ENCODE measurements at regions of chr22 and their contacts with region 1.

Region 1: GRCh38 chr22:36065775-36066559 is 37.3 kb upstream of the RBFOX2 start:
- DNase-seq: peak; percentile 94
- ATAC-seq: peak; percentile 92
- H3K4me3 Mint-ChIP-seq: peak overlapping the region; percentile 84
- H3K27ac Mint-ChIP-seq: peak overlapping the region; percentile 87
- H3K4me1 Mint-ChIP-seq: peaks cover 7% of the 10 kb centered on the region; the same call in 1 of the 2 replicates
- H3K27me3 Mint-ChIP-seq: no peaks in the 10 kb centered on the region; the same call in 1 of the 2 replicates
- CTCF ChIP-seq: peak; percentile 100

Region 2: DNA sequence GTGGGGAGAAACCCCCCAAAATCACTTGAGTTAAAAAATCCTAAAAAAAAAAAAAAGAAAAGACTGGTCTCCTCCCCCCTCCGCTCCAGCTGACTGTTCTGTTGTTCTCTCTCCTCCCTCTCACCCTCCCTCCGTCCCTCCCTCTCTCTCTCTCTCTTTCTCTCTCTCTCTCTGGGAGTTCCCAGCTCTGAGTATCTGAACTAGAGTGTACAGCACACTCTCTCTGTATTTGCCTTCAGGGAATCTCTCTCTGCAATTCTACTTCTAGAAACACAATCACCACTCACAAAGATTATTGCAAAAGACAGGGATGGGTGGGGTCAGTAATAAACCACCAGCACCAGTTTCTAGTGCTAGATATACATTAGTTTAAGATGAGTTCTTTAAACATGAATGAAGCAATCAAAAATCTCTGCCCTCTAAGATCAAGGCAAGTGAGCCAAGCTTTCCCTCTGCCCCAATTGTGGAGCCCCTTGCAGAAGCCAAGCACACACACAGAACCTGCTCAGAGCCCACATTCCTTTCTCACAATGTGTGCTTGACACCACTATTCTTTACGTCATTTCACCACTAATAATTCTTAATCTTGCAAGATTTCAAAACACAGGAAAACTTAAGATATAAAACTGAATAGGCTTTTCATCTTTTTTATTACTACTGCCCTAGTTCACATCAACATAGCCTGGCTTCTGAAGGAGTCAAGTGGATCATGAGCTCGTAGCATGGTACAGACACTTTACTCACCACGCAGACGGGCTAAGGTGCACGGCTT is 170.8 kb before region 1 on chr22:
- CTCF ChIA-PET with region 1: interaction called, 12 read pairs
- POLR2A ChIA-PET with region 1: no interaction called
- DNase-seq: no peak
- ATAC-seq: peak; percentile 72
- H3K4me3 Mint-ChIP-seq: no peak overlapping the region
- H3K27ac Mint-ChIP-seq: peak overlapping the region; percentile 43; the same call in 1 of the 2 replicates
- H3K4me1 Mint-ChIP-seq: peaks cover 46% of the 10 kb centered on the region
- H3K27me3 Mint-ChIP-seq: no peaks in the 10 kb centered on the region
- CTCF ChIP-seq: no peak

Region 3: DNA sequence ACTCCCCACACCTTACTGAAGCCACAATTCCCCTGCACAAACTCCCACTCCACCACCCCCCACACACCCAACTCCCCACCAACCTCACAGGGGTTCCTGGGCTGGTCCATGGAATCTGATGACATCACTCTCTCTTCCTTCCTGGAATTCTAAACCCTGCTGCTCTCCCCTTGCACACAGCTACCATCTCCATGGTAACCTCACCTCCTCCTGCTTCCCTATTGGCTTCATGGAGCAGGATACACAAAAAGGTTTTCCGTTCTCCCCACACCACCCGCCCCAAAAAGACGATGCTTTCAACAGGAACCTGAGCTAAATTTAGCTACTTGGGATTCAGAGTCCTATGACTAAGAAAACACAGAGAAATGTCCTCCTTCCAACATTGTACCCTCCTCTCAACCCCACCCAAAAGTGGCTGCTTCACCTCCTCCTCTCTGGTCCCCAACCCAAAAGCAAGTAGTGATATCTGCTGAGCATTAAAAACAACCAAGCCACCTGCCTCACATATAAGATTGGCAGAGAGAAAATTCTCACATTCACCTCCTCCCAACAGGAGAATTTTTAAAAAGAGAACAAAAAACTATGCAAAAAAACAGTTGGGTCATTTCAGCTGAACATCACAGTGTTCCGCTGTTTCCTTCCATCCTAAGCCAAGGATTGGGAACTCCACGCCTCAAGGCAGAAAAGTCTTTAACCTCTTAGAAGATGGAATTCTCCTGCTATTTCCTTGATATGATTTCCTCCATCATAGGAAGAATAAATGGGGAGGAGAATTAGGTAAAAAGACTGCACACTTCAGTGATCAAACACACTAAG is 104.3 kb before region 1 on chr22:
- CTCF ChIA-PET with region 1: interaction called, 13 read pairs
- POLR2A ChIA-PET with region 1: interaction called, 3 read pairs
- DNase-seq: peak; percentile 60
- ATAC-seq: peak; percentile 99
- H3K4me3 Mint-ChIP-seq: peak overlapping the region; percentile 32
- H3K27ac Mint-ChIP-seq: peak overlapping the region; percentile 91
- H3K4me1 Mint-ChIP-seq: peaks cover 48% of the 10 kb centered on the region
- H3K27me3 Mint-ChIP-seq: no peaks in the 10 kb centered on the region
- CTCF ChIP-seq: no peak

Region 4: DNA sequence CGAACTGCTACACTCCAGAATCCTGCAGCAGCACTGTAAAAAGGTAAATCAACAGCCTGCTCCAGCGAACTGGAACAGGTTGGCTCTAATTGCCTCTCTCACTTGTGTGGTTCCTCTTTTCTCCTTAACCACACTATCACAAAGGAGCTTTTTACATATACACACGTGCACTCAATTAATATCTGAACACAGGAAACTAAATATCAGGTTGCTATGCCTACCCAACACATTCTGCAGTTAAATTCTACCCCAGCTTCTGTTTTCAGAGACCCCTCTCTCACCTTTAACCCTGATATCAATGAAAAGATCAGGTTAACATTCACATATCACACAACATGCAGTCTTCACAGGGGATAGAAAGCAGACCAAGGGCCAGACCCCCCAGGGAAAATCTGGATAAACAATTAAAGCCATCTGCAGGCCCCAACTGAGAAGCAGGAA is 48.3 kb before region 1 on chr22:
- CTCF ChIA-PET with region 1: interaction called, 22 read pairs
- POLR2A ChIA-PET with region 1: interaction called, 3 read pairs
- DNase-seq: no peak
- ATAC-seq: no peak
- H3K4me3 Mint-ChIP-seq: no peak overlapping the region
- H3K27ac Mint-ChIP-seq: peak overlapping the region; percentile 70
- H3K4me1 Mint-ChIP-seq: peaks cover 66% of the 10 kb centered on the region
- H3K27me3 Mint-ChIP-seq: no peaks in the 10 kb centered on the region
- CTCF ChIP-seq: no peak

Region 5: GRCh38 chr22:36086170-36086490 is 20.2 kb after region 1 on chr22:
- CTCF ChIA-PET with region 1: interaction called, 82 read pairs
- POLR2A ChIA-PET with region 1: no interaction called
- DNase-seq: peak; percentile 59
- ATAC-seq: peak; percentile 79
- H3K4me3 Mint-ChIP-seq: no peak overlapping the region
- H3K27ac Mint-ChIP-seq: no peak overlapping the region
- H3K4me1 Mint-ChIP-seq: peaks cover 14% of the 10 kb centered on the region
- H3K27me3 Mint-ChIP-seq: no peaks in the 10 kb centered on the region
- CTCF ChIP-seq: no peak

Region 6: DNA sequence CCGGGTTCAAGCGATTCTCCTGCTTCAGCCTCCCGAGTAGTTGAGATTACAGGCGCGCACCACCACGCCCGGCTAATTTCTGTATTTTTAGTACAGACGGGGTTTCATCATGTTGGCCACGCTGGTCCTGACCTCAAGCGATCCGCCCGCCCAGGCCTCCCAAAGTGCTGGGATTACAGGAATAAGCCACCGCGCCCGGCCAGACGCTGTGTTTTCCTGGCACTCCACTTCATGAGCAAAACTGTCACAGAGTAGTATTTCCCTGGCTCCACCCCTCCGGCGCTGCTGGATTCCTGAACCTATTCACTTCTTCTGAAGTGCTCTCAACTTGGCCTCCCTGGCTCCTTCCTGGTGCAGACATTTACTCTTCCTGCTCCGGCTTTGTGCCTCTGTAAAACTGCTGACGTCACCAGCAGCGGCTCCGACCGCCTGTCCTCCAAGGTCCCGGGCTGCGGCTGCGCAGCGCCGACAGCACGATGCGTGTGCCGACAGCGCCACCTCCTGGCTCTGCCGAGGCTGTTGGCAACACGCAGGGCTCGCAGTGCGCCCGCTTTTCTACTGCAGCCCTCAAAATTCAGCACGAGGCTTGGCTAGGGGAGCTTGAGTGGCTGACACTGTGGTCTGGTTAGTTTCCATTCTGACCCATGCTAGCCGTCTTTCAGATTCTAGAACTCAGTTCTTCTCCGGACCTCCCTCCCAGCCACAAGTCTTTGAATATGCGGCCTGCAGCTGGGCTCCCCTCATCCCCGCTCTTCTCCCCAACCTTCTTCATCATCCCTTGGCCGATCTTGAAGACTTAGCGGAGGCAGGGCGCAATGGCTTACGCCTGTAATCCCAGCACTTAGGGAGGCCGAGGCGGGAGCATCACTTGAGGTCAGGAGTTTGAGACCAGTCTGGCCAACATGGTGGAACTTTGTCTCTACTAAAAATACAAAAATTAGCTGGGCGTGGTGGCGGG is 58.0 kb after region 1 on chr22:
- CTCF ChIA-PET with region 1: interaction called, 41 read pairs
- POLR2A ChIA-PET with region 1: no interaction called
- DNase-seq: peak; percentile 95
- ATAC-seq: peak; percentile 95
- H3K4me3 Mint-ChIP-seq: peak overlapping the region; percentile 39; the same call in 1 of the 2 replicates
- H3K27ac Mint-ChIP-seq: peak overlapping the region; percentile 91
- H3K4me1 Mint-ChIP-seq: peaks cover 15% of the 10 kb centered on the region
- H3K27me3 Mint-ChIP-seq: peaks cover 20% of the 10 kb centered on the region
- CTCF ChIP-seq: peak; percentile 93

Measured in WTC11 (cell line).